PC-3 (cell line): ENCODE measurements at regions of chr6 and their contacts with region 1.

Region 1: DNA sequence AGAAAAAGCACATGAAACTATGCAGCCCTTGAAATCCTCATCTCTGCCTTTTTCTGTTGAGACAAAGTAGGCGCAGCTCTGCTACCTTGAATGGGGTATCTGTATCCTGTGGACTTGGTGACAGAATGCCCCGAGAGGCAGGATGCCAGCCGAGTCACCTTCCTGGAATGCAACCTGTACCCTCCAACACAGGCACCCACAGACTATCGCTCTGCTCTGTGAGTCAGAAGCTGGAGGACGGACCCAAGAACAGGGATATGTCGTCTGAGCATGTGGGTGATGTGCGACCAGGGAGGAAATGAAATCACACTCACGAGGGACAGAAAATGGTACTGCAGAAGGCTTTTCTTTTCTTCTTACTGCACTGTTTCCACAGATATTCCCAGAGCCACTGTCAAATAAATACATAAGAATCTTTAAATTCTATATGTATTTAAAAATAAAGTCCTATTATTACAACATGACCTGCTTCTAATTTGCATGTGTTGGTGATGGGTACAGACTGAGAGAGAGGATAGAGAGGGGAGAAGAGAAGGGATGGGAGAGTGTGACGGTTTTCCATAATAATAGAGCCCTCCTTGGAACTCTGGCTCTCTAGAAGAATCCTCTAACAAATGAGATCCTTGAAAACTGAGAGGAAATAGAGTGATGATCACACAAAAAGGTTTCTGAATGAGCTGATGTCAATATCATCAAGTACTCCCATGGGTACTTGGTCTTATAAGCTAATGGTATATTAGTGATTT is 308.1 kb downstream of the FOXC1 start:
- DNase-seq: peak; percentile 97
- ATAC-seq: peak; percentile 94
- H3K4me3 ChIP-seq: no peak overlapping the region
- H3K27ac ChIP-seq: peak overlapping the region; percentile 80
- H3K4me1 ChIP-seq: peaks cover 26% of the 10 kb centered on the region
- H3K27me3 ChIP-seq: no peaks in the 10 kb centered on the region
- CTCF ChIP-seq: no peak

Region 2: GRCh38 chr6:1686117-1687098 is 231.4 kb before region 1 on chr6:
- CTCF ChIA-PET with region 1: no interaction called
- POLR2A ChIA-PET with region 1: no interaction called
- intact Hi-C with region 1: loop called (anchors 10 kb)
- DNase-seq: peak; percentile 94
- ATAC-seq: peak; percentile 78
- H3K4me3 ChIP-seq: peak overlapping the region; percentile 34; the same call in 1 of the 2 replicates
- H3K27ac ChIP-seq: peak overlapping the region; percentile 92
- H3K4me1 ChIP-seq: peaks cover 55% of the 10 kb centered on the region
- H3K27me3 ChIP-seq: no peaks in the 10 kb centered on the region
- CTCF ChIP-seq: peak; percentile 74

Region 3: DNA sequence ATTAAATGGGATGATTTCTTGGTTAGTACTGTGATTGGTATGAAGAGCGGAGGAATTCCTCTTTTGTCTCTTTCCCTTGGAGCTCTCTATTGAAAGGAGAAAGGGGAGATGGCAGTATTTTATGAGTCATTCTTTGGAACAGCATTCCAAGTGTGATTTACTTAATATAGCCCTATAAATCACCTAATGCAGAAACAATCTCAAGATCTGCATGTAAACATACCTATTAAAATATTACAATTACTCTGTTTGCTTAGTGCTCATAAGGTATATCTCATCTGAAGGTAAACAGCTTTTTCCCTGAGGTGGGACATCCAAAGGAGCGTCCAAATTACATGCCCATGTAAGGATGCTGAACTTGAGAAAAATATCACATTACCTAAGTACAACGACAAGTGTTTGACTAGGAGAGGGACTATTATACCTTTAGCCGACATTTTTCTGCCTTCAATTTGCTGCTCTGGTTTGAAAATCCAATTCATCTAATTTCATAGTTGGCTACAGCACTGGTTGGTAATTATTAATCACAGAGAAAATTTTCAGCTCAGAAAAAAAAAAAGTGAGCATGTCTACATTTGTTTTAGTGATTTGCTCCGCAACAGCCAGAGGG is 79.1 kb before region 1 on chr6:
- CTCF ChIA-PET with region 1: no interaction called
- POLR2A ChIA-PET with region 1: no interaction called
- intact Hi-C with region 1: loop called (anchors 1 kb)
- DNase-seq: peak; percentile 68
- ATAC-seq: peak; percentile 56
- H3K4me3 ChIP-seq: no peak overlapping the region
- H3K27ac ChIP-seq: no peak overlapping the region; the same call in 1 of the 2 replicates
- H3K4me1 ChIP-seq: peaks cover 42% of the 10 kb centered on the region
- H3K27me3 ChIP-seq: no peaks in the 10 kb centered on the region
- CTCF ChIP-seq: no peak

Region 4: DNA sequence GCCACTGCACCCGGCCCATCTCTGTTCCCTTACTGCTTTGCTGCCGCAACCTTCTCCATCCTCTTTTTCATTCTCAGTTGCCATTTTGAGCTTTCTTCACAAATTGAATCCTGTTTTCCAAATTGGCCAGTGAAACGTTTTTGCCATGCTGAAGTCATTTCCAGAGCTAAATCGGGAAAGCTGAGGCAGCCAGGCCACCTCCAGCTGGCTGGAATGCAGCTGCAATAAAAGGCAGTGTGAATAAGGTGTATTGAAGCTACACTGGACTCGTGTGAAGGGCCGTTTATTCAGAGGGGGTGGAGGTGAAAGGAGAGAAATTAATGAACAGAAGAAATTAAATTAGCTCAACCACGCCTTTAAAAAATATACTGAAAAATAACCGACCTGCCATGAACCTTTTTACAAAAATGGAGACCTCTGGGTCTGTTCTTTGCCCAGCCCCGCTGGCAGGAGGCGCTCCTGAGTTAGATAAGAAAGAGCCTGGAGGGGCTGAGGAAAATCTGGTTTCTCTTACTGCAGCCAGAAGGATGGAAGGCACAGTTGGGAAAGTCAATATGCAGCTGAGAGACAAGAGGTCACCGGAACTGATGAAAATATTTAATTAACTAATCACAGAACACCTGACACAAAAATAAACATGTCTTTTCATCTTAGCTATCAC is 24.2 kb before region 1 on chr6:
- CTCF ChIA-PET with region 1: no interaction called
- POLR2A ChIA-PET with region 1: no interaction called
- intact Hi-C with region 1: loop called (anchors 2 kb)
- DNase-seq: peak; percentile 12
- ATAC-seq: no peak
- H3K4me3 ChIP-seq: no peak overlapping the region
- H3K27ac ChIP-seq: no peak overlapping the region
- H3K4me1 ChIP-seq: peaks cover 25% of the 10 kb centered on the region
- H3K27me3 ChIP-seq: no peaks in the 10 kb centered on the region
- CTCF ChIP-seq: peak; percentile 48

Region 5: DNA sequence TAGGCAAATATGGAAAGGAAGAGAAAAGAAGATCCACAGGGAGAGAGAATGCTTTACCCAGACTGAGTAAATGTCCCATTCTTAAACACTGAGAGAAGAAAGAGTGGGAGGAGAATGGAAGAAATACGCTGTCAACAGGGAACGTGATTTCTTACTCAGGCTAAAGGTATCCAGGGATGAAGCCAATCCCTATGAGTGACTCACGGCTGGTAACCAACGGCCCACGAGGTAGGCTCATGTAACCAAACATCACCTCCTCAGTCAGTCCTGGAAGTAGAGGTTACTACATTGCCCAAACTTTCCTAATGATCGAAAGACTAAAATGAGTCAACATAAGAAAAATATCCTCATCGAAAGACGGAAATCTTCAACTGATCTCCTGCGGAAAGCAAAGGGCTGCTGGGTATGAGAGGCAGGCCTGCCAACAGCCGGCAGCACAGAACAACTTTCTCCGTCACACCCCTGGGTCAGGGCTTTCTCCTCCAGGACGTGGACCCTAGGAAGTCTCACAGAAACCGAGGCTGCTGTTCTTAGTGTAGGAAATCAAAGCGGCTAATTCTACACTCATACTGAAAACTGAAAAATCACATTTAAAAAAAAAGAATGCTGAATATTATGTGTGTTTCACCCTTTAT is 35.0 kb after region 1 on chr6:
- CTCF ChIA-PET with region 1: no interaction called
- POLR2A ChIA-PET with region 1: no interaction called
- intact Hi-C with region 1: loop called (anchors 2 kb)
- DNase-seq: peak; percentile 97
- ATAC-seq: peak; percentile 100
- H3K4me3 ChIP-seq: peak overlapping the region; percentile 47; the same call in 1 of the 2 replicates
- H3K27ac ChIP-seq: peak overlapping the region; percentile 80
- H3K4me1 ChIP-seq: peaks cover 16% of the 10 kb centered on the region
- H3K27me3 ChIP-seq: no peaks in the 10 kb centered on the region
- CTCF ChIP-seq: peak; percentile 32; the same call in 1 of the 2 replicates

Region 6: GRCh38 chr6:2158596-2159271 is 240.9 kb after region 1 on chr6:
- CTCF ChIA-PET with region 1: no interaction called
- POLR2A ChIA-PET with region 1: no interaction called
- intact Hi-C with region 1: no loop called
- DNase-seq: peak; percentile 25
- ATAC-seq: no peak
- H3K4me3 ChIP-seq: no peak overlapping the region
- H3K27ac ChIP-seq: no peak overlapping the region
- H3K4me1 ChIP-seq: peaks cover 22% of the 10 kb centered on the region
- H3K27me3 ChIP-seq: no peaks in the 10 kb centered on the region
- CTCF ChIP-seq: peak; percentile 52